ENCODE measurements at regions of chr17 and their contacts with region 1.

Region 1: DNA sequence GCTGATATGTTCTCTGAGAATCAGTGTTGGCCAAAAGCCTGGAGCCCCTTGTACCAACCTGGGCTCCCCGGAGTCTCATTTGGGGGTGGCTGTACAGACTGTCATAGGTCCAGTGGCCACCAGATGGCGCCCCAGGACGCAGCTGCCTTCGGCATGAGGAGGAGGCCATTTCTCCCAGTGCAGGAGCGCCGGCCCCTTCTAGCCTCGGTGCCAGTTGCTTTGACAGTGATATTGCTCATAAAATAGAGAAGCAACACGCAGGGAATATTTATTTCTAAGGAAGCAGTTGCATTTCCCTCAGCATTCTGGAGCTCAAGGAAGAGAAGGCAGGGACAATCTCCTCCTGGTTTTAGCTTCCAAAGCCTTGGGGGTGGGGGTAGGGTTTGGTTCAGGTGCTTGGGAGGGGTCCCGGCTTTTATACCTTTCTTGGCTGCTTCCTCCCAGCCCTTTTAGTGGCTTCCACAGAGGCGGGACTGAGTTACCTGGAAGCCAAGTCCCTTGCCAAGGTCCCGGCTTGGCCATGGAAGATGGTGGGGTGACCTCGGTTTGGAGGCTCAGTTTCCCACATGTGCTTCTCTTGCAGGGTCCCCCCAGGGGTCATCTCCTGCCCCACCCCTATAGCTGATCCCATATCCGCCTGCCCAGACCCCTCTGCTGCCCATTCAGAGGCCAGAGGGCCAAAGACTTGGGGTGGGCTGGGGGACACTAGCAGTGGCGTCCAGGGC is 117.8 kb upstream of the CDC42EP4 start:
- DNase-seq: peak; percentile 71 to 93
- H3K4me3 ChIP-seq: no peak overlapping the region
- H3K4me1 ChIP-seq: no peaks in the 10 kb centered on the region
- H3K27me3 ChIP-seq: no peaks in the 10 kb centered on the region

Region 2: GRCh38 chr17:73705594-73705993 is 276.0 kb after region 1 on chr17:
- in situ Hi-C with region 1: loop called (anchors 10 kb)
- DNase-seq: no peak
- H3K4me3 ChIP-seq: no peak overlapping the region
- H3K4me1 ChIP-seq: no peaks in the 10 kb centered on the region
- H3K27me3 ChIP-seq: no peaks in the 10 kb centered on the region

Region 3: GRCh38 chr17:74176546-74177001 is 747.0 kb after region 1 on chr17:
- in situ Hi-C with region 1: loop called (anchors 10 kb)
- DNase-seq: peak; percentile 45 to 73
- H3K4me3 ChIP-seq: no peak overlapping the region
- H3K4me1 ChIP-seq: no peaks in the 10 kb centered on the region
- H3K27me3 ChIP-seq: peaks cover 5% of the 10 kb centered on the region; the same call in 1 of the 2 replicates

Measured in HAP-1 (cell line).